ENCODE measurements at regions of chr3 and their contacts with region 1.

Region 1: GRCh38 chr3:51967384-51968169 is at the start of gene PCBP4:
- DNase-seq: peak in 7 of 14 experiments; percentile 40 to 69 (median 53)
- ATAC-seq: peak; percentile 76
- H3K4me3 ChIP-seq: peak within 1 kb of the TSS; percentile 65
- H3K4me3 Mint-ChIP-seq: peak within 1 kb of the TSS; percentile 91
- H3K27ac ChIP-seq: peak within 1 kb of the TSS; percentile 38 to 44
- H3K27ac Mint-ChIP-seq: peak within 1 kb of the TSS; percentile 62
- H3K4me1 ChIP-seq: peaks cover 33% of the 10 kb centered on the region
- H3K4me1 Mint-ChIP-seq: peaks cover 40% of the 10 kb centered on the region
- H3K27me3 ChIP-seq: peaks cover 0 to 2% of the 10 kb centered on the region in 2 experiments
- H3K27me3 Mint-ChIP-seq: no peaks in the 10 kb centered on the region
- CTCF ChIP-seq: no peak
- total RNA-seq, gene PCBP4: 14.7 to 16.8 TPM

Region 2: GRCh38 chr3:51982782-51983577 is 15.4 kb after region 1 on chr3 and contains the start of gene ACY1:
- CTCF ChIA-PET with region 1: interaction called, 46 read pairs
- POLR2A ChIA-PET with region 1: interaction called, 24 read pairs
- intact Hi-C with region 1: no loop called
- DNase-seq: peak in 13 of 14 experiments; percentile 36 to 85 (median 56)
- ATAC-seq: peak; percentile 85
- H3K4me3 ChIP-seq: peak within 1 kb of the TSS; percentile 75
- H3K4me3 Mint-ChIP-seq: peak within 1 kb of the TSS; percentile 93
- H3K27ac ChIP-seq: peak within 1 kb of the TSS; percentile 69 to 85
- H3K27ac Mint-ChIP-seq: peak within 1 kb of the TSS; percentile 81
- H3K4me1 ChIP-seq: peaks cover 42% of the 10 kb centered on the region
- H3K4me1 Mint-ChIP-seq: peaks cover 20% of the 10 kb centered on the region
- H3K27me3 ChIP-seq: no peaks in the 10 kb centered on the region
- H3K27me3 Mint-ChIP-seq: no peaks in the 10 kb centered on the region
- CTCF ChIP-seq: peak; percentile 3
- total RNA-seq, gene ACY1: 4.9 TPM